ENCODE measurements at regions of chr22 and their contacts with region 1.

Region 1: GRCh38 chr22:50341977-50342650 is 1.0 kb upstream of the PPP6R2 start:
- DNase-seq: peak; percentile 95
- ATAC-seq: peak; percentile 64
- H3K4me3 Mint-ChIP-seq: peak overlapping the region; percentile 71
- H3K27ac Mint-ChIP-seq: peak overlapping the region; percentile 83
- H3K4me1 Mint-ChIP-seq: peaks cover 7% of the 10 kb centered on the region
- H3K27me3 Mint-ChIP-seq: no peaks in the 10 kb centered on the region

Region 2: GRCh38 chr22:50185384-50186087 is 156.6 kb before region 1 on chr22 and contains the start of gene TRABD:
- CTCF ChIA-PET with region 1: no interaction called
- POLR2A ChIA-PET with region 1: no interaction called
- intact Hi-C with region 1: loop called in 1 of 2 experiments (anchors 1 kb)
- DNase-seq: peak; percentile 95
- ATAC-seq: peak; percentile 80
- H3K4me3 Mint-ChIP-seq: peak within 1 kb of the TSS; percentile 84
- H3K27ac Mint-ChIP-seq: peak within 1 kb of the TSS; percentile 92
- H3K4me1 Mint-ChIP-seq: peaks cover 27% of the 10 kb centered on the region
- H3K27me3 Mint-ChIP-seq: no peaks in the 10 kb centered on the region
- total RNA-seq, gene TRABD: 60.7 to 74.5 TPM

Region 3: GRCh38 chr22:50250555-50251476 is 91.3 kb before region 1 on chr22 and contains the start of gene HDAC10:
- CTCF ChIA-PET with region 1: interaction called, 11 read pairs
- POLR2A ChIA-PET with region 1: no interaction called
- intact Hi-C with region 1: loop called in 1 of 2 experiments (anchors 1 kb)
- DNase-seq: peak; percentile 94
- ATAC-seq: peak; percentile 93
- H3K4me3 Mint-ChIP-seq: peak within 1 kb of the TSS; percentile 82
- H3K27ac Mint-ChIP-seq: peak within 1 kb of the TSS; percentile 51
- H3K4me1 Mint-ChIP-seq: peaks cover 19% of the 10 kb centered on the region
- H3K27me3 Mint-ChIP-seq: no peaks in the 10 kb centered on the region
- total RNA-seq, gene HDAC10: 33.5 to 41.5 TPM

Region 4: DNA sequence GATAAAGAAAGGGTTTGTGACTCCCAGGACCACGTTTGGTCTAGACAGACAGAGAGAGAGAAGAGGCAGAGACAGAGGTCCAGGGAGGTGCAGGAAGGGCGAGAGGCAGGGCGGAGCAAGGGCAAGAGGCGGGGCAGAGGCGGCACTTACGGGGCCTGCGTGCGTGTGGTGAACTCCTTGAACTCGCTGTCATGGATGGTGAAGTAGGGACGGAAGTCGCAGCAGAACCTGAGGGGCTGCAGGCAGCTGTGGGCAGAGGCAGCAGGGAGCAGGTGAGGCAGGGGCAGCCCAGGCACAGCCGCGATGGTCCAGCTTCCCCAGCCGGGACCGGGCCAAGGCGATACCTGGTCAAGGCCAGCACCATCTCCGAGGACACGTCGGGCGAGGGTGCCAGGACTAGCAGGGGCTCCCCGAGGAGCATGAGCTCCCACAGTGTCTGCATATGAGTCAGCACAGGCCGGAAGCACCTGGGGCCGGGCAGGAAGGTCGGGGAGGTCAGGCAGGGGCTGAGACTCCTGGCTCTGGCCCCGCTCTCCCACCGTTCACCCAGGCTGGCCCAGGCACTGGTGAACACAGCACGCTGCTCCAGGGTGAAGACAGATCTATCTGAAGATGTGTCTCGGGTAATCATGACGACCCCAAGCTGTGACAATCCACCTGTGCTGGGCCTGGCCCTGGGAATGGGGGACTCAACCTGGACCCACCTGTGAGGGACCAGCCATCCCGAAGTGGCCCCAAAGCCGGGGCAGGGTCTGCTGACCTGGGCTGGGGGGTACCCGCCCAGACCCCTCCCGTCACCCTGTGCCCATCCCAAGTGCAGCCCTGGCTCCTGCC is 27.4 kb before region 1 on chr22:
- CTCF ChIA-PET with region 1: interaction called, 7 read pairs
- POLR2A ChIA-PET with region 1: no interaction called
- intact Hi-C with region 1: loop called in 1 of 2 experiments (anchors 2 kb)
- DNase-seq: peak; percentile 88
- ATAC-seq: peak; percentile 96
- H3K4me3 Mint-ChIP-seq: peak overlapping the region; percentile 76
- H3K27ac Mint-ChIP-seq: peak overlapping the region; percentile 92
- H3K4me1 Mint-ChIP-seq: peaks cover 16% of the 10 kb centered on the region
- H3K27me3 Mint-ChIP-seq: no peaks in the 10 kb centered on the region

Region 5: DNA sequence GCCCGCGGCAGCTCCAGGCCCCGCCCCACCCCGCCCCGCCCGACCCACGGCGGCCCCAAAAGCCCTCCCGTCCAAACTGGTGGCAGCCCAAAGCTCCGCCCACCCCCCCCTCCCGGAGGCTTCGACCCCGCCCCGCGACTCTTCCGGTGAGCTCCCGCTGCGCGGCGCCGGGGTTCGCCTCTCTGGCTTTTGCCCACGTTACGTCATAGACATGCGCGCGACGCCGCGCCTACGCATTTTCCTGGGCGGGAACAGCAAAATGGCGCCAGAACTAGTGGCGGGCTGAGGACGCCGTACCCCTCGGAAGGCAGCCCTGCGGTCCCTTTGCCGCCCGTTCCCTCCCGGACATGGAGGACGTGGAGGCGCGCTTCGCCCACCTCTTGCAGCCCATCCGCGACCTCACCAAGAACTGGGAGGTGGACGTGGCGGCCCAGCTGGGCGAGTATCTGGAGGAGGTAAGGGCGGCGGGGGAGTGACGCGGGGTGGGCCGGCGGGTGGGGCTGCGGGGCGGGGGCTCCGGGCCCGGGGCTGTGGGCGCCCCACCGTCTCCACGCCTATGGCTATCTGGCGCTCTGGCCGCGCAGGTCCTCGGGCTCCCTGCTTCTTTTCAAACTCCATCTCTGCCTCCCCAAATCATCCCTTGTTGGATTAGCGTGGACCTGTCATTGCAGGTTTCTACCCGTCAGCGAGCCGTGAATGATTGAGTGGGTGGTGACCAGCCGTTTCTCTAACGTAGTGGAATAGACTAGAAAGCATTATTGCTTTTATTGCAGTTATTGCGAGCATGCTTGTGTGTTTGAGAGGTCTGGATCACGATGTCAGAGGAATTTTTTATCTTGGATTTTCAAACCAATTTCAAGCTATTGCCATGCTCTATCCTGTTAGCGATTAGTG is 166.1 kb after region 1 on chr22 and contains the start of gene NCAPH2:
- CTCF ChIA-PET with region 1: no interaction called
- POLR2A ChIA-PET with region 1: no interaction called
- intact Hi-C with region 1: loop called in 1 of 2 experiments (anchors 1 kb)
- DNase-seq: peak; percentile 99
- ATAC-seq: peak; percentile 79
- H3K4me3 Mint-ChIP-seq: peak within 1 kb of the TSS; percentile 91
- H3K27ac Mint-ChIP-seq: peak within 1 kb of the TSS; percentile 95
- H3K4me1 Mint-ChIP-seq: peaks cover 23% of the 10 kb centered on the region
- H3K27me3 Mint-ChIP-seq: no peaks in the 10 kb centered on the region
- total RNA-seq, gene NCAPH2: 115 to 123 TPM

Region 6: GRCh38 chr22:50620593-50621355 is 278.7 kb after region 1 on chr22:
- CTCF ChIA-PET with region 1: interaction called, 6 read pairs
- POLR2A ChIA-PET with region 1: no interaction called
- intact Hi-C with region 1: loop called (anchors 1 to 5 kb)
- DNase-seq: peak; percentile 87
- ATAC-seq: peak; percentile 70
- H3K4me3 Mint-ChIP-seq: peak overlapping the region; percentile 80
- H3K27ac Mint-ChIP-seq: peak overlapping the region; percentile 97
- H3K4me1 Mint-ChIP-seq: peaks cover 40% of the 10 kb centered on the region
- H3K27me3 Mint-ChIP-seq: no peaks in the 10 kb centered on the region